Adrenal gland (tissue), 19 donors: ENCODE measurements at regions of chr11 and their contacts with region 1.

Region 1: GRCh38 chr11:124953753-124954589 is at the start of gene CCDC15:
- DNase-seq: peak; percentile 96 to 99 (median 98)
- H3K4me3 ChIP-seq: peak within 1 kb of the TSS; percentile 26 to 65 (median 56)
- H3K27ac ChIP-seq: peak within 1 kb of the TSS in 4 of 5 donors; percentile 34 to 84 (median 75)
- H3K4me1 ChIP-seq: peaks cover 5 to 13% of the 10 kb centered on the region in 2 donors
- H3K27me3 ChIP-seq: no peaks in the 10 kb centered on the region
- CTCF ChIP-seq: no peak
- POLR2A ChIP-seq: peak; percentile 70 to 78
- total RNA-seq, gene CCDC15: 0.78 to 4.9 (median 2.0) TPM

Region 2: GRCh38 chr11:125141686-125142535 is 187.9 kb after region 1 on chr11:
- intact Hi-C with region 1: loop called in 1 of 2 experiments (anchors 10 kb)
- DNase-seq: peak in 6 of 7 donors; percentile 45 to 65 (median 51)
- H3K4me3 ChIP-seq: no peak overlapping the region
- H3K27ac ChIP-seq: no peak overlapping the region
- H3K4me1 ChIP-seq: peaks cover 0 to 10% of the 10 kb centered on the region in 2 donors
- H3K27me3 ChIP-seq: no peaks in the 10 kb centered on the region
- CTCF ChIP-seq: peak; percentile 86 to 98 (median 96)
- POLR2A ChIP-seq: no peak